Posterior vena cava (tissue), 2 donors: ENCODE measurements at regions of chr17 and their contacts with region 1.

Region 1: DNA sequence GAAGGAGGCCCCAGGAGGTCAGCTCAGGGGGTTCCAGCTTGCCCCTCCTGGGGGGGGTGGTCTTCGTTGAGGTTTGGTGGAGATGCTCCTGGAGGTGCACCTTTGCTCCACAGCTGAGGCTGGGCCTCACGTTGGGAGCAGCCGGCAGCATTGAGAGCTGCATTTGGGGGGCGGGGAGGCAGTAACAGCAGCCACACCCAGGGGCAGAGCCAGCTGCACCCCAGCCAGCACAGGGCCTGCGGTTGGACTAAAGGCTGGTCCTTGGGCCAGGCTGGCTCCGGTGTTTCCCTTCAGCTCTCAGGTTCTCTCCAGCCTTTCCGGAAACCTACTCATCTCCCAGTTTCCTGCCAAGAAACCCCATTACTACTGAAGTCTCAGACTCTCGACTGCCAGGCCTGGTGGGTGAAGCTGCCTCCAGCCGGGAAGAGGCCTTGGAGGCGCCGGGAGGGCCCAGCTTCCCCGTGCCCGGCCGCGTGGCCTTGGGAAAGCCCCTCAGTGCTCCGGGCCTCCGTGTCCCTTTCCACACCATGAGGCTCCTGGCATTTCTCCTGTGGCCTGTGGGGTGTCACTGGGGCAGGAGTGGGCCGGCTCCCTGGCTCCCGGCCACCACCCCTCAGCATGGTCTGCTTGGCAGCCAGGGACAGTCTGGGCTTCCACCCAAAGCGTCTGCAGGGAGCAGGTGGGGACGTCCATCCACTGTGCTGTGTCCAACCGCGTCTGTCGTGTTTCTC is 14.0 kb upstream of the BAIAP2 start:
- DNase-seq: no peak

Region 2: DNA sequence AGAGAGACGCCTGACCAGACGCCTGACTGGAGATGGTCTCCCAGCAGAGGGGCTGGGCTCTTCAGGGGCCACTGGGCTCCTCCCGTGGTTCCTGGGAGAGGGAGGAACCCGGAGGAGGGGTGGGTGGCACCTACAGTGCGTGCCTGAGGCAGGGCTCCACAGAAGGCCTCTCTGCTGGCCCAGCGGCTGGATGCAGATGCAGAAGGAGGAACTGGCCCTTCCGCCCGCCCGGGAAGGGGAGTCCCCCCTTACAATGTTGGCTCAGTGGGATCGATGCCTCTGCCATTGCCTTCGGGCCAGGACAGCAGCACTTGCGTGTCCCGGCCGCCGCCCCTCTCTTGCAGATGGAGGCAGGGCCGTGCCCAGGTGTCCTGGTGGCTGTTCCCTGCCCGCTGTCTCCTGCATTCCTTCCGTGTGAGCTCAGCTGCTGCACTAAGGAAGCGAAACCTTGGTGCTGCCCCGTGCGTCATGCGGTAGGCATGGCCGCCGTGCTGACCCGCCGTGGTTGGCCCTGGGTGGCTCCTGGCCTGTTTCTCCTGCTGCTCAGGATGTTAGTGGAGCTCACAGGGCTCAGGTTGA is 29.1 kb after region 1 on chr17:
- intact Hi-C with region 1: loop called in 1 of 2 experiments (anchors 1 kb)
- DNase-seq: no peak

Region 3: GRCh38 chr17:81101614-81102306 is 80.8 kb after region 1 on chr17:
- intact Hi-C with region 1: loop called (anchors 5 to 10 kb)
- DNase-seq: peak; percentile 94